ENCODE measurements at regions of chr6 and their contacts with region 1.

Region 1: DNA sequence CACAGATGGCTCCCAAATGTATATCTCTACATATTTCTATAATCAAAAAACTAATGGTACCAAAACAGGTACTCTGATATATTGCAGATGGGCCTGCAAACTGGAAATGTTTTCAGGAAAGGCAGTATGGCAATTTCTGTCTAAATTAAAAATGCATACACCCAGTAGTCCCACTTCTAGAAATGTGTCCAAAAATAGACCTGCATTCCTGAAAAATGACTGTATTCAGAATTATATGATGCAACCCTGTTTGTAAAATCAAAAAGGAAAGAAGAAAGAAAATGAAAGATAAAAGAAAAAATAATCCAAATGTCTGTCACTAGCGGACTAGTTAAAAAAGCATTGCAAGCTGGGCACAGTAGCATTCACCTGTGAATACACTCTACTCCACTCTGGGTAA is 12.9 kb upstream of the MICB start:
- DNase-seq: no peak
- H3K4me3 Mint-ChIP-seq: no peak overlapping the region
- H3K27ac Mint-ChIP-seq: no peak overlapping the region
- H3K4me1 Mint-ChIP-seq: no peaks in the 10 kb centered on the region
- H3K27me3 Mint-ChIP-seq: no peaks in the 10 kb centered on the region

Region 2: GRCh38 chr6:31383149-31383548 is 101.9 kb before region 1 on chr6:
- CTCF ChIA-PET with region 1: no interaction called
- POLR2A ChIA-PET with region 1: no interaction called
- intact Hi-C with region 1: loop called (anchors 1 kb)
- DNase-seq: peak; percentile 25
- H3K4me3 Mint-ChIP-seq: no peak overlapping the region
- H3K27ac Mint-ChIP-seq: no peak overlapping the region
- H3K4me1 Mint-ChIP-seq: no peaks in the 10 kb centered on the region
- H3K27me3 Mint-ChIP-seq: peaks cover 11% of the 10 kb centered on the region